Activated T-helper 2 cell treated with anti-CD3 and anti-CD28 coated beads, Interferon-gamma antibody, Interleukin-2, Interleukin-4, amounts not matched to agents 10 μg/mL and 5 μg/mL and 100 μg/mL, durations not matched to agents 14 hours and 24 hours and 36 hours (primary cell): ENCODE measurements at regions of chr7 and their contacts with region 1.

Region 1: DNA sequence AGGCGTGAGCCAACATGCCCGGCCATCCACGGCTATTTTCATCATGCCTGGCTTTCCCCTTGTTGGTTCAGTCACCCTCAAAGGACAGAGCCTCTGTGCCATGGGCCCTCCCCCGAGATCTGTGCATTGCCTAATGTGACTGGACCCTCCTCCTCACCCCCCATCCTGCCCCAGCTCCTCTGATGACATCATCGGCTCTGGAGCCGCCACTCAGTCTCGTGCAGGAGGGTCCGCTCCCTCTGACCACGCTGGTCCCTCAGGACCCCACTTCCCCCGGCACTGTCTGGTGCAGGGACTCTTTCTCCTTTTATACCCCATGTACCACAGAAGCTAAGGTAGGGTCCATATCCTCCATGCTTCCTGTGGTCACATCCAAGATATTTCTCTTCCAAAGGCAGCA is 33.2 kb upstream of the BAIAP2L1 start:
- DNase-seq: no peak
- H3K4me3 Mint-ChIP-seq: no peak overlapping the region
- H3K27ac Mint-ChIP-seq: no peak overlapping the region
- H3K4me1 Mint-ChIP-seq: no peaks in the 10 kb centered on the region
- H3K27me3 Mint-ChIP-seq: no peaks in the 10 kb centered on the region

Region 2: GRCh38 chr7:98745722-98746318 is 311.7 kb after region 1 on chr7:
- intact Hi-C with region 1: loop called (anchors 1 kb)
- DNase-seq: peak; percentile 37
- H3K4me3 Mint-ChIP-seq: no peak overlapping the region
- H3K27ac Mint-ChIP-seq: no peak overlapping the region
- H3K4me1 Mint-ChIP-seq: no peaks in the 10 kb centered on the region
- H3K27me3 Mint-ChIP-seq: no peaks in the 10 kb centered on the region

Region 3: GRCh38 chr7:98841179-98841997 is 407.3 kb after region 1 on chr7:
- intact Hi-C with region 1: loop called (anchors 2 kb)
- DNase-seq: peak; percentile 31
- H3K4me3 Mint-ChIP-seq: no peak overlapping the region
- H3K27ac Mint-ChIP-seq: no peak overlapping the region
- H3K4me1 Mint-ChIP-seq: no peaks in the 10 kb centered on the region
- H3K27me3 Mint-ChIP-seq: no peaks in the 10 kb centered on the region

Region 4: DNA sequence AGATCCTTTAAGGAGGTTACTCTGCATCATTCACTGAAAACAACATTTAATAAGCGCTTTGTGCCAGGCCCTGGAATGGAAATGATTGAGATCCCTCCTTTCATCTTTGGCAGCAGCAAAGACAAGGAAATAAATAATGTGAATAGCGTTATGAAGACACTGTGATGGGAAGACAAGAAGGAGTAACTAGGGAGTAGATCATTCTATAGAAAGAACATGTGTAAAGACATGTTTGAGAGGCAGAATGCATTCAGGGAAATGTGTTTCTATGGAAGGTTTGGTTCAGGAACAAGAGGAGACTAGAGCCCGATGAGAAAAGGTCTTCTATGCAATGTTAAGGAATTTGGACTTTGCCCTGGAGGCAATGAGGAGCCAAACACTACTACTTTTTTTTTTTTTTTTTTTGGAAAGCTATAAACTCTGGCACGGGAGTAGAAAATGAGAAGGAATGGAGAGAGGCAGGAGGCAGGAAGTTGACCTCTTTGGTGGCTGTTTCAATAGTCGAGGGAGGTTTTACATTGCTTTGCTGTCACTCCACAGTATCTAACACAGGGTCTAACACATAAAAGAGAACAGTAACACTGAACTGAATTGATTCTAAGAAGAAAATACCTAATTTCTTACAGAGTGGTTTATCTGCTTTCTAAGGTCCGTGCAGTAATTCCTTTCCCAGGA is 664.9 kb after region 1 on chr7:
- intact Hi-C with region 1: no loop called
- DNase-seq: no peak
- H3K4me3 Mint-ChIP-seq: no peak overlapping the region
- H3K27ac Mint-ChIP-seq: no peak overlapping the region
- H3K4me1 Mint-ChIP-seq: peaks cover 24% of the 10 kb centered on the region
- H3K27me3 Mint-ChIP-seq: no peaks in the 10 kb centered on the region

Region 5: GRCh38 chr7:99312316-99313203 is 878.5 kb after region 1 on chr7:
- intact Hi-C with region 1: no loop called
- DNase-seq: peak; percentile 58
- H3K4me3 Mint-ChIP-seq: no peak overlapping the region
- H3K27ac Mint-ChIP-seq: no peak overlapping the region
- H3K4me1 Mint-ChIP-seq: peaks cover 15% of the 10 kb centered on the region
- H3K27me3 Mint-ChIP-seq: peaks cover 1% of the 10 kb centered on the region